ENCODE measurements at regions of chr14 and their contacts with region 1.

Region 1: GRCh38 chr14:61347826-61348443 is 26.6 kb downstream of the PRKCH start:
- DNase-seq: no peak
- H3K4me3 Mint-ChIP-seq: peak overlapping the region; percentile 73
- H3K27ac Mint-ChIP-seq: peak overlapping the region; percentile 93
- H3K4me1 Mint-ChIP-seq: peaks cover 86% of the 10 kb centered on the region
- H3K27me3 Mint-ChIP-seq: no peaks in the 10 kb centered on the region

Region 2: DNA sequence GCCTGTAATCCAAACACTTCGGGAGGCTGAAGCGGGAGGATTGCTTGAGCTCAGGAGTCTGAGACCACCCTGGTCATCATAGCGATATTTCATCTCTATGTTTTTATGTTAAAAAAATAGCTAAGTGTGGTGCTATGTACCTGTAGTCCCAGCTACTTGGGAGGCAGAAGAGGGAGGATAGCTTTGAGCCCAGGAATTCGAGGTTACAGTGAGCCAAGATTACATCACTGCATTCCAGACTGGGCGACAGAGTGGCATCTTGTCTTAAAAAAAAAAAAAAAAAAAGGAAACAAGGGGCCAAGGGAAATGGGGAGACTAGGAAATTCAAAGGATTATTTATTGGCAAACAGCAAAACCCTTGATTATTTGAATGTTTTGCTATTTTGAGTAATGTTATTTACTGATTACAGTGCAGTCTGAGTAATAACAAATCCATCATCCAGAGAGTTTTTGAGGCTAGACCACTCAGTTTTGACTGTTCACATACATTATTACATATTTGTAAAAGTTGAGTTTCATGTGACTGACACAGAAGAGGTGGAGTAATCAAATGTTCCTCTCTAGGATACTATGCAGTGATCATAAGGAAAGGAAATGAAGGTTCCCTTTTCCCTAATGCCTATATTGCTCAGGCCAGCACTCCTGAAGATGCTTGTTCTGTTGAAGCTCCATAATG is 14.3 kb after region 1 on chr14:
- intact Hi-C with region 1: loop called (anchors 2 kb)
- DNase-seq: no peak
- H3K4me3 Mint-ChIP-seq: no peak overlapping the region
- H3K27ac Mint-ChIP-seq: no peak overlapping the region
- H3K4me1 Mint-ChIP-seq: peaks cover 39% of the 10 kb centered on the region
- H3K27me3 Mint-ChIP-seq: no peaks in the 10 kb centered on the region

Measured in activated T-helper 2 cell treated with anti-CD3 and anti-CD28 coated beads, Interferon-gamma antibody, Interleukin-2, Interleukin-4, amounts not matched to agents 10 μg/mL and 5 μg/mL and 100 μg/mL, durations not matched to agents 14 hours and 24 hours and 36 hours (primary cell).